ENCODE measurements at regions of chr16 and their contacts with region 1.

Region 1: GRCh38 chr16:67104061-67104460 is 5.7 kb upstream of the PHAF1 start:
- DNase-seq: no peak
- ATAC-seq: peak; percentile 70
- H3K4me3 ChIP-seq: no peak overlapping the region
- H3K27ac ChIP-seq: no peak overlapping the region
- H3K4me1 ChIP-seq: peaks cover 9% of the 10 kb centered on the region
- H3K27me3 ChIP-seq: no peaks in the 10 kb centered on the region
- CTCF ChIP-seq: peak in 2 of 3 experiments; percentile 25 to 32; a peak in 2 of 6 replicates
- EP300 ChIP-seq: no peak
- POLR2A ChIP-seq: no peak
- RAD21 ChIP-seq: no peak

Region 2: DNA sequence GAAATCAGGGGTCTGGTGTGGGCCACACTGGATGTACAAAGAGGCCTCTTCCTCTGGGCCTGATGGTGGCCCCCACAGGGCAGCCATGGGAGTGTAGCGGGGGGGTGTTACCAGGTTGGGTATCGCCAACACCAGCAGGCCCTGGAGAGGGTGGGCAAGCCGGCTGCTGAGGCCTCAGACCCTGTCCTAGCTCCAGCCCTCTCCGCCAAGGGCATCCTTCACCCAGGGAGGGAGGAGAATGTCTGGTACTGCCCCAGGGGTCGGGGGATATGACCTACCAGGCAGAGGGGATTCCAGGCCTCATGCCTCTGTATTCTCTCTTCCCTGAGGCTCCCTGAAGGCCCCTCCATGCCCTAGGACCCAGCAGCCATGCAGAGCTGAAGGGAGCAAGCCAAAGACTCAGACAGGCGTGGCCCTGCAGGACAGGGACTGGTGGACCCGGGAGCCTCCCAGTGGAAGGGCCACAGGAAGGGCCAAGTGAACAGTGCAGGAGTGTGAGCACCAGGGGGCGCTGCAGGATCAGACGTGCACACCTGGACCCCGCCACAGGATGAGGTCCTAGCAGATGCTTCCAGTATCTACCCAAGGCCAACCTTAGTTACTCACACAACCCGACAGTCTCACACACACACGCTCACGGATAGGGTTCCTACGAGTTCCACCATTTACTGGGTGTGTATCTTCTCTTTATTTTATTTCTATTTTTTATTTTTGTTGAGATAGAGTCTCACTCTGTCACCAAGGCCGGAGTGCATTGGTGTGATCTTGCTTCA is 126.5 kb before region 1 on chr16:
- CTCF ChIA-PET with region 1: interaction called, 13 read pairs
- POLR2A ChIA-PET with region 1: interaction called, 5 read pairs
- RAD21 ChIA-PET with region 1: interaction called, 3 read pairs
- SMC1A ChIA-PET with region 1: interaction called, 9 read pairs
- in situ Hi-C with region 1: no loop called
- intact Hi-C with region 1: loop called (anchors 2 kb)
- DNase-seq: peak; percentile 21
- ATAC-seq: peak; percentile 99
- H3K4me3 ChIP-seq: no peak overlapping the region
- H3K27ac ChIP-seq: no peak overlapping the region
- H3K4me1 ChIP-seq: peaks cover 3% of the 10 kb centered on the region; the same call in 1 of the 2 replicates
- H3K27me3 ChIP-seq: no peaks in the 10 kb centered on the region
- CTCF ChIP-seq: peak; percentile 92 to 99 (median 95); a peak in 5 of 6 replicates
- EP300 ChIP-seq: no peak
- POLR2A ChIP-seq: no peak
- RAD21 ChIP-seq: peak; percentile 92

Region 3: GRCh38 chr16:67028555-67029248 is 75.4 kb before region 1 on chr16 and contains the start of gene CBFB:
- CTCF ChIA-PET with region 1: interaction called, 11 read pairs
- POLR2A ChIA-PET with region 1: interaction called, 4 read pairs
- RAD21 ChIA-PET with region 1: interaction called, 8 read pairs
- SMC1A ChIA-PET with region 1: interaction called, 11 read pairs
- in situ Hi-C with region 1: no loop called
- intact Hi-C with region 1: no loop called
- DNase-seq: peak; percentile 75
- ATAC-seq: peak; percentile 89
- H3K4me3 ChIP-seq: peak within 1 kb of the TSS; percentile 72
- H3K27ac ChIP-seq: peak within 1 kb of the TSS; percentile 99
- H3K4me1 ChIP-seq: peaks cover 13% of the 10 kb centered on the region
- H3K27me3 ChIP-seq: no peaks in the 10 kb centered on the region
- CTCF ChIP-seq: no peak
- EP300 ChIP-seq: no peak
- POLR2A ChIP-seq: peak; percentile 98
- RAD21 ChIP-seq: no peak
- polyA plus RNA-seq, gene CBFB: 25.3 to 43.6 TPM

Region 4: GRCh38 chr16:67043420-67043819 is 60.6 kb before region 1 on chr16:
- CTCF ChIA-PET with region 1: interaction called, 16 read pairs
- POLR2A ChIA-PET with region 1: no interaction called
- RAD21 ChIA-PET with region 1: interaction called, 3 read pairs
- SMC1A ChIA-PET with region 1: interaction called, 4 read pairs
- in situ Hi-C with region 1: no loop called
- intact Hi-C with region 1: no loop called
- DNase-seq: no peak
- ATAC-seq: no peak
- H3K4me3 ChIP-seq: no peak overlapping the region
- H3K27ac ChIP-seq: no peak overlapping the region
- H3K4me1 ChIP-seq: peaks cover 21% of the 10 kb centered on the region
- H3K27me3 ChIP-seq: no peaks in the 10 kb centered on the region
- CTCF ChIP-seq: no peak
- EP300 ChIP-seq: no peak
- POLR2A ChIP-seq: no peak
- RAD21 ChIP-seq: no peak

Region 5: DNA sequence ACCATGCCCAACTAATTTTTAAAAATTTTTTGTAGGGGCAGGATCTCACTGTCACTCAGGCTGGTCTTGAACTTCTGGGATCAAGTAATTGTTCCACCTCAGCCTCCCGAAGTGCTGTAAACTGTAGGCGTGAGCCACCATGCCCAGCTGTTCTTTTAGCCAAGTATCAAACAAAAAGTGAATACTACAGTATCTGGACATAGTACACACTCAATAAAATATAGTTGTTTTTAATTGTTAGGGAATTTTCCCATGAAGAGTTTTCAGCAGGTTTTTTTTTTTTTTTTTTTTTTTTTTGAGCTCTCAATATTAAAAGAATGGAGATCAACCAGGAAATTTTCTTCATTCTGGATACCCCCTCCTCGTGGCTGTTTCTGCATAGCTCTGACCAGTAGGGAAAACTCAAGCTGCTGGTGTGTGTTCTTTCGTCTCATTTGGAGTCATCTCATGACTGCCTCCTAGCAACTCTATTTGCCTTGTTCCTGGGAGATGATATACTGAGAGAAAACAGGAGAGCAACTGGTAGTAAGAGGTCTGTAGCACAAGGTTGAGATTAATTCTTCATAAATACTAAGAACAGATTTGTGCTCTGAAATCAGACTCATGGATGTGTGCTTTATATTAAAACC is 10.8 kb before region 1 on chr16:
- CTCF ChIA-PET with region 1: interaction called, 11 read pairs
- POLR2A ChIA-PET with region 1: interaction called, 3 read pairs
- RAD21 ChIA-PET with region 1: interaction called, 3 read pairs
- SMC1A ChIA-PET with region 1: interaction called, 6 read pairs
- in situ Hi-C with region 1: no loop called
- intact Hi-C with region 1: no loop called
- DNase-seq: no peak
- ATAC-seq: no peak
- H3K4me3 ChIP-seq: no peak overlapping the region
- H3K27ac ChIP-seq: no peak overlapping the region
- H3K4me1 ChIP-seq: peaks cover 12% of the 10 kb centered on the region; the same call in 1 of the 2 replicates
- H3K27me3 ChIP-seq: no peaks in the 10 kb centered on the region
- CTCF ChIP-seq: no peak
- EP300 ChIP-seq: no peak
- POLR2A ChIP-seq: no peak
- RAD21 ChIP-seq: no peak

Region 6: DNA sequence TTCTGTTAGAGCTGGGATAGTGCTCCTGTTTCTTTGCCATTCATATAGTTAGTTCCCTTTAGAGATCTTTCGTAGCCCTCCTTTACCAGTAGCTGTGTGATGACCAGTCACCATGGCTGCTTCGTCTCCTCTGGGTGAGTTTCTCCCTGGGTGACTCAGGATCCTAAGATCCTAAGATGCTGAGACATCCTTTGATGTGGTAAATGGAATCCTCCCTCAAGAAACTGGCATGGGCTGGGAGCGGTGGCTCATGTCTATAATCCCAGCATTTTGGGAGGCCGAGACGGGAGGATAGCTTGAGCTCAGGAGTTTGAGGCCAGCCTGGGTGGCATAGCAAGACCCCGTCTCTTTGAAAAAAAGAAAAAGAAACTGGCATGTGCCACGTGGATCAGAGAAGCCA is 11.6 kb after region 1 on chr16:
- CTCF ChIA-PET with region 1: interaction called, 12 read pairs
- POLR2A ChIA-PET with region 1: interaction called, 9 read pairs
- RAD21 ChIA-PET with region 1: no interaction called
- SMC1A ChIA-PET with region 1: interaction called, 5 read pairs
- in situ Hi-C with region 1: no loop called
- intact Hi-C with region 1: no loop called
- DNase-seq: no peak
- ATAC-seq: no peak
- H3K4me3 ChIP-seq: no peak overlapping the region
- H3K27ac ChIP-seq: no peak overlapping the region
- H3K4me1 ChIP-seq: peaks cover 3% of the 10 kb centered on the region; the same call in 1 of the 2 replicates
- H3K27me3 ChIP-seq: no peaks in the 10 kb centered on the region
- CTCF ChIP-seq: no peak
- EP300 ChIP-seq: no peak
- POLR2A ChIP-seq: no peak
- RAD21 ChIP-seq: no peak